IMR-90 (cell line): ENCODE measurements at regions of chr2 and their contacts with region 1.

Region 1: GRCh38 chr2:227471924-227472264 is at the start of gene AGFG1:
- DNase-seq: peak; percentile 67
- ATAC-seq: peak; percentile 93
- H3K4me3 ChIP-seq: peak within 1 kb of the TSS; percentile 99
- H3K27ac ChIP-seq: peak within 1 kb of the TSS; percentile 83
- H3K4me1 ChIP-seq: peaks cover 5% of the 10 kb centered on the region
- H3K27me3 ChIP-seq: no peaks in the 10 kb centered on the region
- CTCF ChIP-seq: peak; percentile 97
- POLR2A ChIP-seq: peak; percentile 81
- RAD21 ChIP-seq: peak; percentile 58
- total RNA-seq, gene AGFG1: 93.6 and 126 TPM in 2 replicates

Region 2: DNA sequence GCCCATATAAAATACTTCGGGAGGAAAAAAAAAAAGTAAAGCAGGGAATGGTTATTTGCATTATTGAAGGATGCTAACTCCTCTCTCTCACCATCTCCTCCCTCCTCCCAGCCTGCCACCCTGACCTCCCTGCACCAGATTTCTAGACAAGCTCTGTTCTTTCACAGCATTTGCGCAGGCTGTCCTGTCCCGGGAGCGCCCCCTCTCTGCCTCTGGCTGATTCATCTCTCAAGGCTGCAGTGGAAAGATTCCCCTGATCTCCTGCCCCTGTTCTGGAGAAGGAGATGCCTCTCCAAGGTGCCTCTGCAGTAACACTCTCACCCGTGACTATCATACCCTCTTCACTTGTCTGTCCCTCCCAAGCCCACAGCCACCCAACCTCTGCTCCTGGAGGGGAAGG is 346.4 kb before region 1 on chr2:
- CTCF ChIA-PET with region 1: no interaction called
- POLR2A ChIA-PET with region 1: no interaction called
- dilution Hi-C with region 1: no loop called
- in situ Hi-C with region 1: no loop called
- intact Hi-C with region 1: loop called (anchors 10 kb)
- DNase-seq: no peak
- ATAC-seq: no peak
- H3K4me3 ChIP-seq: no peak overlapping the region
- H3K27ac ChIP-seq: no peak overlapping the region
- H3K4me1 ChIP-seq: no peaks in the 10 kb centered on the region
- H3K27me3 ChIP-seq: peaks cover 24% of the 10 kb centered on the region
- CTCF ChIP-seq: no peak
- POLR2A ChIP-seq: no peak
- RAD21 ChIP-seq: no peak

Region 3: GRCh38 chr2:227486688-227487087 is 14.8 kb after region 1 on chr2:
- CTCF ChIA-PET with region 1: no interaction called
- POLR2A ChIA-PET with region 1: no interaction called
- dilution Hi-C with region 1: no loop called
- in situ Hi-C with region 1: no loop called
- intact Hi-C with region 1: loop called (anchors 1 kb)
- DNase-seq: no peak
- ATAC-seq: no peak
- H3K4me3 ChIP-seq: no peak overlapping the region
- H3K27ac ChIP-seq: no peak overlapping the region
- H3K4me1 ChIP-seq: peaks cover 2% of the 10 kb centered on the region
- H3K27me3 ChIP-seq: no peaks in the 10 kb centered on the region
- CTCF ChIP-seq: no peak
- POLR2A ChIP-seq: no peak
- RAD21 ChIP-seq: no peak

Region 4: DNA sequence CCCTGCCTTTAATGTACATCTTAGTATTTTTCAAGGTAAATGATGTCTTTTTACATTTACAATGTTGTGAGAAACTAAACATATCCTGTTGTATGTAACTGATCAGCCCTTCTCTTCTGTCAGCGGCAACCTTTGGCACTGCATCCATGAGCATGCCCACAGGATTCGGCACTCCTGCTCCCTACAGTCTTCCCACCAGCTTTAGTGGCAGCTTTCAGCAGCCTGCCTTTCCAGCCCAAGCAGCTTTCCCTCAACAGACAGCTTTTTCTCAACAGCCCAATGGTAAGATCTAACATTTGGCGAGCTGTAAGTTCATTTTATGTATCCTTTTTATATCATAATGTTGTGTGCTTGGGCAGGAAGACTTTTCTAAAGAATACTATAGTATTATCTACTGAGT is 79.9 kb after region 1 on chr2:
- CTCF ChIA-PET with region 1: interaction called, 3 read pairs
- POLR2A ChIA-PET with region 1: no interaction called
- dilution Hi-C with region 1: no loop called
- in situ Hi-C with region 1: no loop called
- intact Hi-C with region 1: loop called (anchors 5 kb)
- DNase-seq: no peak
- ATAC-seq: no peak
- H3K4me3 ChIP-seq: no peak overlapping the region
- H3K27ac ChIP-seq: no peak overlapping the region
- H3K4me1 ChIP-seq: no peaks in the 10 kb centered on the region
- H3K27me3 ChIP-seq: no peaks in the 10 kb centered on the region
- CTCF ChIP-seq: no peak
- POLR2A ChIP-seq: no peak
- RAD21 ChIP-seq: no peak

Region 5: DNA sequence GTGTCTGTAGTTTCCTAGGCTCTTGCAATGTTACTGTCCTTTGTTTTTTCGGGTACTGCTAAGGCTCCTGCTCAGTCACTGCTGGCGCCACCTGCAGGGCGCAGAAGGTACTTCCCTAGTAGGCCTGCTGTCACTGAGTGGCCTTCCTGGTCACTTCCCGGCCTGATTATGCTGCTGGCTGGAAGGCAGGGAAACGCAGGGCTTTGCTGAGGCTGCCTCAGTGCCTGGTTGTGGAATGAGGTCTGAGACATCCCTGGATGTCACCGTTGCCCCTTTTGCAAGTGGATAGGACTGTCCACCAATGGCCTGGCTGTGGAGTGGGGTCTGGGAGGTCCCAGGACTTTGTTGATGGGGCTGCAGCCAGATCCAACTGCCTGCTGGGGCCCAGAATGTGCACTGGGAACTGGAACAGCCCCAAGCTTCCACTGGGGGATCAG is 412.6 kb after region 1 on chr2:
- CTCF ChIA-PET with region 1: no interaction called
- POLR2A ChIA-PET with region 1: no interaction called
- dilution Hi-C with region 1: no loop called
- in situ Hi-C with region 1: no loop called
- intact Hi-C with region 1: loop called (anchors 10 kb)
- DNase-seq: peak; percentile 72
- ATAC-seq: peak; percentile 99
- H3K4me3 ChIP-seq: no peak overlapping the region
- H3K27ac ChIP-seq: no peak overlapping the region
- H3K4me1 ChIP-seq: 0 out of 2 replicates have a peak, but pooled peaks cover 1% of the 10 kb centered on the region
- H3K27me3 ChIP-seq: no peaks in the 10 kb centered on the region
- CTCF ChIP-seq: peak; percentile 76
- POLR2A ChIP-seq: no peak
- RAD21 ChIP-seq: peak; percentile 65